Posterior vena cava (tissue), 2 donors: ENCODE measurements at regions of chr15 and their contacts with region 1.

Region 1: DNA sequence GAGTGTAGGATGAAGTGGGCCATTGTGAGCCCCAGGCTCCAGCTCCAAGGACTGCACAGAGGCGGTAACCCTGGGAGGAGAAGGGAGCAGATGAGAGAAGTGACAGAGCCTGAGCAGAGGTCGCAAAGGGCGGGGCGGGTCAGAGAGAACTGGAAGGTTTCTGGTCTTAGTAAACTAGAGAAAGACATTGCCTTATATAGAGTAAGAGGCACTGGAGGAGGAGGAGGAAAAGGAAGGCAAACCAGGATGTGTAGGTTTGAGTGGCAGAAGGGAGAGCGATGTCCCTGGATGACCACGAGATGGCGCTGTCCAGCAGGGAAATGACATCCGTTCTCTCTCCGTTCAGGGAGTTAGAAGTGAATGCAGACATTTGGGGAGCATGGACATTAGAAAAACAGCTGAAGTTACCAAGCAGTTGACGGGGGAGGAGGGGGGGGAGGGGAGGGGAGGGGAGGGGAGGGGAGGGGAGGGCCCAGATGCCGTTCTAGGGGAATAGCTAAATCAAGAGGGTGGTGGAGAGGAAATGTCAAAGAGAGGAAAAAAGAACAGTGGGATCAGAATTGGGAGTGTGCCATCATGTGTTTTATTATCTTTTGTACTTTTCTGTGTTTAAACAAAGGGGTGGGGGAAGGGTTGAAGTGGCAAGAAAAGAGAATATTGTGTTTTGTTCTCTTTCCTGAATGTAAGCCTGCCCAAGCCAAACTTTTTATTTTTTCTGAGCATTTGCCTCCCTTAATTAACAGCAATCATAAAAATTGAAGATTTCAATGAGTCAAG is 48.8 kb downstream of the STARD5 start:
- DNase-seq: peak; percentile 90

Region 2: GRCh38 chr15:81229586-81229985 is 45.5 kb before region 1 on chr15:
- intact Hi-C with region 1: no loop called
- DNase-seq: peak; percentile 88

Region 3: GRCh38 chr15:81336568-81336967 is 61.4 kb after region 1 on chr15:
- intact Hi-C with region 1: loop called in 1 of 2 experiments (anchors 5 kb)
- DNase-seq: no peak

Region 4: DNA sequence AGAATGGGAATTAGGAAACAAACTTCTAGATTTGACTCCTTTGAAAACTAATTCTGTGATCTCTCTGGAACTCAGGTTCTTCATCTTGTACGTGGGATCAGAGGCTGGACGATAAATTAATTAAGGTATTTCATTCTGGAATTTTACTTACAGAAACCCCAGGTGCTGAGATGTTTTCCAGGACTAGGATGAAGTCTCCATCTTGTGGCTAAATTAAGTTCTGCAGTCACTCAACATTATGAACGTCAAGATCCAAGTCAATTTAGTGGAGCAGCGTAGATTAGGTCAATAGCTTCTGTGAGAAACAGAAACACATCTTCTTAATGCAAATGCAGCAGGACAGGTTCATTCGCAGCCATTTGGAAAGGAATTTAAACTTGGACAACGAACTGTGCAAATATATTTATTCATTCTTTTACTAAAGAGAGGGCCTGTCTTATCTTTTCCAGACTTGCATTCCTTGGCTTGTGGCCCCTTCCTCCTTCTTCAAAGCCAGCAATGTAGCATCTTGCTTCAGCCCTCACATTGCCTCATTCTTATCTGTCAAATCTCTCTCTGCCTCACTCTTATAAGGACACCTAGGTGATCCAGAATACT is 125.6 kb after region 1 on chr15:
- intact Hi-C with region 1: loop called (anchors 2 to 5 kb)
- DNase-seq: no peak